Activated T-helper 2 cell treated with anti-CD3 and anti-CD28 coated beads, Interferon-gamma antibody, Interleukin-2, Interleukin-4, amounts not matched to agents 10 μg/mL and 5 μg/mL and 100 μg/mL, durations not matched to agents 14 hours and 24 hours and 36 hours (primary cell): ENCODE measurements at regions of chr5 and their contacts with region 1.

Region 1: GRCh38 chr5:170571875-170572852 is 68.3 kb downstream of the KCNIP1 start:
- DNase-seq: peak; percentile 20
- H3K4me3 Mint-ChIP-seq: no peak overlapping the region
- H3K27ac Mint-ChIP-seq: no peak overlapping the region
- H3K4me1 Mint-ChIP-seq: peaks cover 14% of the 10 kb centered on the region
- H3K27me3 Mint-ChIP-seq: peaks cover 45% of the 10 kb centered on the region

Region 2: GRCh38 chr5:170597109-170597751 is 25.1 kb after region 1 on chr5:
- intact Hi-C with region 1: loop called (anchors 1 kb)
- DNase-seq: no peak
- H3K4me3 Mint-ChIP-seq: no peak overlapping the region
- H3K27ac Mint-ChIP-seq: no peak overlapping the region
- H3K4me1 Mint-ChIP-seq: peaks cover 17% of the 10 kb centered on the region
- H3K27me3 Mint-ChIP-seq: peaks cover 25% of the 10 kb centered on the region